Keratinocyte (primary cell): ENCODE measurements at regions of chr7 and their contacts with region 1.

Region 1: DNA sequence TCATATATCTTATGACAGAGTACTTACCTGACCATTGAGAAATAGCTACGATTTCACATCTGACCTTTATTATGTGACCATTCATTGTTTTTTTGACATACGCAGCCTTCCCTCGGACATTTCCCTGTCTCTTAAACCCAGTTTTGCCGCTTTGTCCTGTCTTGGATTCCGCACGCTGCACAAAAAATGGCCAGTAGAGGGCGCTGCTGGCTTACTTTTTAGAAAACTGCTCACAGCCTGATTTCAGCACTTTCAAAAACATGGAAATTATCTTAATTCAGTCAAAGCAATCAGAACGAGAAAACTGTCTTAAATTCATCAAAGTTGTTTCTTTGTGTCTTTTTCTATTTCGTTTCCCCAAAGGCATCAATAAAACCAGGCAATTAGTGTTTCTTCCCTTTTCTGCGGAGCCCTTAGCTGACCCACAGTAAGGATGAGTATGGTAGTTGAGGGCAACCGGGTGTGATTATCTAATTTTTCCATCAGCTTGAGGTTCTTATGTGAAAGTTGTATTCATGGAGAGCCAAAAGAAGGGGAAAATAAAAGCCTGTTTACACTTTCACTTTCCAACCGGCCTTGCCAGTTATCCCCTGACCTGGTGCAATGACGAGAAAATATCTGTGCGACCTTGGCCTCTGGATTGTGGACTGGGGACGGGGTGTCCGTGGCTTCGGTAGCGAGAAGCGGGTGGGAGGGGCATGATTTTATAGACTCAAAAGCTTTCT is 144.4 kb downstream of the DYNC1I1 start:
- DNase-seq: peak; percentile 2
- H3K4me3 ChIP-seq: no peak overlapping the region
- H3K27ac ChIP-seq: no peak overlapping the region
- H3K4me1 ChIP-seq: no peaks in the 10 kb centered on the region
- H3K27me3 ChIP-seq: no peaks in the 10 kb centered on the region
- CTCF ChIP-seq: peak; percentile 69 to 85 (median 72)

Region 2: GRCh38 chr7:97027427-97028234 is 1110.9 kb after region 1 on chr7:
- dilution Hi-C with region 1: loop called (anchors 25 kb)
- DNase-seq: peak; percentile 45
- H3K4me3 ChIP-seq: peak overlapping the region in 1 of 3 experiments; percentile 43
- H3K27ac ChIP-seq: no peak overlapping the region
- H3K4me1 ChIP-seq: peaks cover 9% of the 10 kb centered on the region
- H3K27me3 ChIP-seq: peaks cover 14% of the 10 kb centered on the region
- CTCF ChIP-seq: peak; percentile 93 to 98 (median 97)